ENCODE measurements at regions of chr4 and their contacts with region 1.

Region 1: DNA sequence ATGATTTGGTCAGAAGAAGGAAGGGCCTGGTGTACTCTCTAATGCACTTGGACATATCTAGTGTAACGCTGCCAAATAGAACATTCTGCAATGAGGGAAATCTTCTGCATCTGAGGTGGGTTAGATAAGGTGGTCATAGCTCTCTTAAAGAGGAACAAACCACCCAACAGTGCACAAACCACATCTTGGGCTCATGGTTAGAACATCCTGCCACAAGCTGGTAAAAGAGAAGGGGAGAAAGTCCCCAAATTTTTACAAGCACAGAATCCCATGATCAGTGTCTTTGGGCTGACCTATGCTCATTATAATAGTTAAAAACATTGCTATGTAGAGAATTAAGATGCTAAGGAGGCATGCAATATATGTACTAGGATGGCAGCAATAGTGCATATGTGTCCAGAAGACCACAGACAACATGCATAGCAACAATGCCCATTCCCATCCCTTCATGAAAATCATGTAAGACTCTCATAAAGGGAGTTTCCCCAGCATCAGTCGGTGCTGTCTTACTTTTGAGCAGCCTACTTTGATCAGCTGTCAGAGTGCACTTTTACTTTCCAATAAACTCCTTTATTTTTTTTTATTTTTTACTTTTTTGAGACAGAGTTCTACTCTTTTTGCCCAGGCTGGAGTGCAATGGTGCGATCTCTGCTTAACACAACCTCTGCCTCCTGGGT is 99.7 kb upstream of the SLC7A11 start:
- DNase-seq: no peak
- H3K4me3 ChIP-seq: no peak overlapping the region
- H3K27ac ChIP-seq: no peak overlapping the region
- H3K4me1 ChIP-seq: peaks cover 8% of the 10 kb centered on the region
- H3K27me3 ChIP-seq: no peaks in the 10 kb centered on the region
- CTCF ChIP-seq: no peak

Region 2: GRCh38 chr4:138003248-138003647 is 338.6 kb before region 1 on chr4:
- CTCF ChIA-PET with region 1: no interaction called
- dilution Hi-C with region 1: no loop called
- in situ Hi-C with region 1: no loop called
- intact Hi-C with region 1: no loop called
- DNase-seq: no peak
- H3K4me3 ChIP-seq: no peak overlapping the region
- H3K27ac ChIP-seq: no peak overlapping the region
- H3K4me1 ChIP-seq: peaks cover 3% of the 10 kb centered on the region
- H3K27me3 ChIP-seq: no peaks in the 10 kb centered on the region
- CTCF ChIP-seq: no peak

Region 3: DNA sequence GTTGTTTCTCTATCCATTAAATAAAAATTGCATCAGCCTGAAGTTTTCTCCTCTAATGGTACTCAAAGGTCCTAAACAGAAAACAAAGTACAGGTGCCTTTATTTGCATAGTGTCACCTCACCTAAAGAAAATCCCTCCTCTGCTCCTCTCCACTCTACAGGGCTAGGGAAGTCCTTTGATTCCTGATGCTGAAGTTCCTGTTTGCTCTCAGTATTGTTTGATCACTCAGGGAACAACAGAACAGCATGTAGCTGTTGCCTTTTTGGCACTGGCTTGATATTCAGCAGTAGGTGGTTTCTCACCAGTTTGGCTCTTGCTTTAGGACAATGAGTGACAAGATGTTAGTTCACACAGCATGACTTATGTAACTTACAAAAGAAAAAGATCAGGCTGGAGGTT is 56.4 kb after region 1 on chr4:
- CTCF ChIA-PET with region 1: no interaction called
- dilution Hi-C with region 1: no loop called
- in situ Hi-C with region 1: no loop called
- intact Hi-C with region 1: loop called (anchors 5 kb)
- DNase-seq: no peak
- H3K4me3 ChIP-seq: no peak overlapping the region
- H3K27ac ChIP-seq: no peak overlapping the region
- H3K4me1 ChIP-seq: no peaks in the 10 kb centered on the region
- H3K27me3 ChIP-seq: no peaks in the 10 kb centered on the region
- CTCF ChIP-seq: no peak

Region 4: GRCh38 chr4:138445098-138445497 is 103.2 kb after region 1 on chr4:
- CTCF ChIA-PET with region 1: no interaction called
- dilution Hi-C with region 1: no loop called
- in situ Hi-C with region 1: no loop called
- intact Hi-C with region 1: no loop called
- DNase-seq: no peak
- H3K4me3 ChIP-seq: no peak overlapping the region
- H3K27ac ChIP-seq: no peak overlapping the region
- H3K4me1 ChIP-seq: no peaks in the 10 kb centered on the region
- H3K27me3 ChIP-seq: no peaks in the 10 kb centered on the region
- CTCF ChIP-seq: no peak